ENCODE measurements at regions of chr17 and their contacts with region 1.

Region 1: DNA sequence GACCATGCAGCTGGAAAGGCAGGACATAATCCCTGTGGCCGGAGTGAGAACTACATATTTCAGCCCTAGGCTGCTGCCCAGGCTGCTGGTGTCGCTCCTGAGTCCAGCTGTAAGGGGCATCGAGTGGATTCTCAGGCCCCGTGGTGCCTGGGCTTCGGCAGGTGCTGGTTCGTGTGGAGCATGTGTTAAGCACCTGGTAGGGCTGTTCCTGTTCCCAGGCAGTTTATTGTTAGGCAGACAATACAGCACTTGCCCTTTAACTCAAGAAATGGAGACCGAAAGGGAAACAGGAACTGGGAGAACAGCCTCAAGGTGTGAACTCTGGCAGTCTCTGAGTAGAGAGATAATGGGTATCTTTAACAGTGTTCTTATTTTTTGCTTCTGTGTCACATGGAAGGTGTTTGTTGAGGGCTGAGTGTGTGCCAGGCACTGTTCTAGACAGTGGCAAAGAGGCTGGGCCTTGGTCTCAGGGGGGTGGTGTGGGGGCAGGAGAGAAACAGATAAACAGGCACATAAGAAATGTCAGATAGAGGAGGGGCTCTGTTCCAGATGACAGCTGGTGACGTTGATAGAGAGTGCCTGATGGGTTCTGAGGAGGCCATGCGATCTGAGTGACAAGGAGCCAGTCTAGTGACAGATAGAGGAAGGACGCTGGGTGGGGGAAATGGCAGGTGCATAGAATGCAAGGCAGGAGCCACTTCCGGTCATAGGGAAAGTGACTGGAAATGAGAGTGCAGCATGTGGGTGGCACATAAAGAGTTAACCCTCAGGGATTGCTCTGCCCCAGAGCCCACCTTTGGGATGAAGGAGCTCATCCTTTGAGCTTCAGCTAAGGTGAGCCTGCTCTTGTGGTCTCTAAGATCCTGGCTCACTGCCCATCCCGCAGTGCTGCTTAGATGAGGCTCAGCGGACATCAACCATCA is 33.8 kb downstream of the EPN2 start:
- DNase-seq: peak in 4 of 5 donors; percentile 54 to 90 (median 76)
- ATAC-seq: peak; percentile 84 to 92 (median 88)
- H3K4me3 ChIP-seq: no peak overlapping the region
- H3K27ac ChIP-seq: peak overlapping the region; percentile 42 to 88 (median 74)
- H3K4me1 ChIP-seq: peaks cover 14 to 95% (median 66%) of the 10 kb centered on the region in 12 donors
- H3K27me3 ChIP-seq: no peaks in the 10 kb centered on the region
- CTCF ChIP-seq: peak in 7 of 12 donors; percentile 7 to 31 (median 26)
- POLR2A ChIP-seq: no peak

Region 2: GRCh38 chr17:19250421-19251173 is 20.4 kb before region 1 on chr17:
- intact Hi-C with region 1: loop called in 1 of 10 experiments (anchors 2 kb)
- DNase-seq: peak in 4 of 5 donors; percentile 41 to 84 (median 74)
- ATAC-seq: peak; percentile 88 to 93 (median 90)
- H3K4me3 ChIP-seq: peak overlapping the region in 3 of 12 donors; percentile 1 to 15 (median 13)
- H3K27ac ChIP-seq: peak overlapping the region; percentile 41 to 93 (median 80)
- H3K4me1 ChIP-seq: peaks cover 4 to 94% (median 55%) of the 10 kb centered on the region in 12 donors
- H3K27me3 ChIP-seq: no peaks in the 10 kb centered on the region
- CTCF ChIP-seq: no peak
- POLR2A ChIP-seq: peak in 1 of 2 donors; percentile 18

Region 3: GRCh38 chr17:19286751-19287341 is 15.9 kb after region 1 on chr17:
- intact Hi-C with region 1: loop called in 1 of 10 experiments (anchors 2 kb)
- DNase-seq: no peak
- ATAC-seq: peak in 3 of 4 donors; percentile 28 to 32 (median 29)
- H3K4me3 ChIP-seq: no peak overlapping the region
- H3K27ac ChIP-seq: peak overlapping the region in 5 of 12 donors; percentile 8 to 52 (median 14)
- H3K4me1 ChIP-seq: peaks cover 3 to 85% (median 55%) of the 10 kb centered on the region in 12 donors
- H3K27me3 ChIP-seq: peaks cover 0 to 4% (median 0%) of the 10 kb centered on the region in 9 donors
- CTCF ChIP-seq: no peak
- POLR2A ChIP-seq: no peak

Region 4: DNA sequence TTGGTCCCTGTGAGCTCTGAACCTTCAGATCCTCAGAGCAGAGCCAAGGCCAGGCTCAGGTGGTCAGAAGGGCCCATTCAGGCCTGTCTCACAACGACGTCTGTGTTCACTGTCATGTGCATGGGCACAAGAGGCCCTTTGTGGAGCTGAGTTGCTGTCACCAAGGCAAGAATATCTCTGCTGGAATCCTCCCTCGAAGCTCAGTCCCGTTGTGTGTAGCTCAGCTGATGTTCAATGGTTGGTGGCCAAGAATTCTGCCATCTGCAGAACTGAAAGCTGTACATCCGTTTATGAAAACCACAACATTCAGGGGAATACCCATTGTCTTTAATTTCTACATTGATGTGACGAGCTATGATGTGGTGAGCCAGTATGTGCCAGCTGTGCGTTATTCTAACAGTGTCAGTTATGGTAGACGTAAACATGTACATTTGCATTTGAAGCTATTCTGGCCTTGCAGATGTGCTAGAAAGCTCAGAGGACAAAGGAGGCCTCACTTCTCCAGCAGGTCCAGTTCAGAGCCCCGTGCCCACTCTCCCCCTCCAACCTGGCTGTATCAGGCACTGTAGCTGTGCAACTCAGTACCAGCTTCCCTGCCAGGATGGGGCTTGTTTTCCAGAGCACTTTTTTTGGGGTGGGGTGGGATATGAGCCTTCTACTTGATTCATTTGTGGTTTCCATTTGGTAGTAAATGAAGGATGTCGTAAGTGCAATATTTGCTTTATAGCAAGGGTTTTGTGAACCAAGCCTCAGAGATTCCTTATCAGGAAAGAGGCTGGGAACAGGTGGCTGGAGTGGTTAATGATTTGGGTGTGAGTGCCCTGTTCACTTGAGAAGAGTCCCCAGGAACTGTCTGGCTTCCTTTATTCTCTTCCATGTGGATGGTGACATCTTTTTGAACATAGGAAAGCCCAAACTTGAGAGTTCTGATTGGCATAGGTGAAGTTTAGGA is 35.5 kb after region 1 on chr17:
- intact Hi-C with region 1: no loop called
- DNase-seq: no peak
- ATAC-seq: no peak
- H3K4me3 ChIP-seq: no peak overlapping the region
- H3K27ac ChIP-seq: peak overlapping the region in 4 of 12 donors; percentile 23 to 75 (median 48)
- H3K4me1 ChIP-seq: peaks cover 9 to 67% (median 60%) of the 10 kb centered on the region in 12 donors
- H3K27me3 ChIP-seq: peaks cover 0 to 40% (median 0%) of the 10 kb centered on the region in 9 donors
- CTCF ChIP-seq: no peak
- POLR2A ChIP-seq: no peak

Region 5: GRCh38 chr17:19482576-19482975 is 211.6 kb after region 1 on chr17:
- intact Hi-C with region 1: no loop called
- DNase-seq: no peak
- ATAC-seq: no peak
- H3K4me3 ChIP-seq: no peak overlapping the region
- H3K27ac ChIP-seq: peak overlapping the region in 1 of 12 donors; percentile 61
- H3K4me1 ChIP-seq: peaks cover 0 to 9% (median 0%) of the 10 kb centered on the region in 12 donors
- H3K27me3 ChIP-seq: no peaks in the 10 kb centered on the region
- CTCF ChIP-seq: no peak
- POLR2A ChIP-seq: no peak

Measured in heart left ventricle (tissue), 16 donors.